Right cardiac atrium (tissue), 5 donors: ENCODE measurements at regions of chr7 and their contacts with region 1.

Region 1: DNA sequence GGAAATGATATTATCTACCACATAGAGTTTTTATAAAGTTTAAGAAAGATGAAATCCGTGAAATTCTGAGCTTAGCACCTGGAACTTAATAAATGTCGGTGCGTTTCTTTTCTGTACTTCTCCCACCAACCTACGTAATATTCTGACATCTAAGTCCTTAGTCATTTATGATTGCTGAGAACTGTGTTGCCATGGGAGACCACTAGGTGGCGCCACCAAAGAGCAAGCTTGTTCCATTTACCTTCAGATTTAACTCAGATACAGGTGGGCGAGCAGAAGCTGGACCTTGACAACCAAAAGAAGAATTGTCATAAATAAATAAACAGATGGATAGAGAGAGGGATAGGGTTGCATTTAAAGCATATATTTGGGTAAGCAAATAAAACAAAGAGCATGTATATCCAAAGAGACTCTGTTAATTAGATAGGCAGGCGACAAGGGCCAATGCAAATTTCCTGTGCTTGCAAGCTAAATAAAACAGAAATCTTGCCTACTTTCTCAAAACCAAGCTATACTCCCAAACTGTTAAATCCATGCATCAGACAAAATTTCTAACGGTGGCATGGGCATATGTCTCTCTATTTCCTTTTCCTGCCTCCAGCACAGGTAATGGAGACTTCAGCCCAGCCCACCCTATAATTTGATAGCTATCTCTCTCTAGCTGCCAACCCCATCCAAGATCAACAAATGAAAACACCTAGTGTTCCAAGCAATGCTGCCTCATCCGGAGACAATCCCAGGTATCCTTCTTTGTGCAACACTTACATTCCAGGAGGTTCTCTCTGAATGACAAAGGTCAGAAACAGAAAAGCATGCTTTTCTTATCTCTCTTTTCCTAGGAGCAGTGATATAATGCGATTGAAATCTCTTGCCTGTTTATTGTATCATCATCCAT is 699.6 kb downstream of the INHBA start:
- DNase-seq: peak; percentile 16 to 55 (median 49)
- ATAC-seq: no peak
- H3K4me3 ChIP-seq: no peak overlapping the region
- H3K27ac ChIP-seq: no peak overlapping the region
- H3K4me1 ChIP-seq: peaks cover 2% of the 10 kb centered on the region
- H3K27me3 ChIP-seq: no peaks in the 10 kb centered on the region

Region 2: DNA sequence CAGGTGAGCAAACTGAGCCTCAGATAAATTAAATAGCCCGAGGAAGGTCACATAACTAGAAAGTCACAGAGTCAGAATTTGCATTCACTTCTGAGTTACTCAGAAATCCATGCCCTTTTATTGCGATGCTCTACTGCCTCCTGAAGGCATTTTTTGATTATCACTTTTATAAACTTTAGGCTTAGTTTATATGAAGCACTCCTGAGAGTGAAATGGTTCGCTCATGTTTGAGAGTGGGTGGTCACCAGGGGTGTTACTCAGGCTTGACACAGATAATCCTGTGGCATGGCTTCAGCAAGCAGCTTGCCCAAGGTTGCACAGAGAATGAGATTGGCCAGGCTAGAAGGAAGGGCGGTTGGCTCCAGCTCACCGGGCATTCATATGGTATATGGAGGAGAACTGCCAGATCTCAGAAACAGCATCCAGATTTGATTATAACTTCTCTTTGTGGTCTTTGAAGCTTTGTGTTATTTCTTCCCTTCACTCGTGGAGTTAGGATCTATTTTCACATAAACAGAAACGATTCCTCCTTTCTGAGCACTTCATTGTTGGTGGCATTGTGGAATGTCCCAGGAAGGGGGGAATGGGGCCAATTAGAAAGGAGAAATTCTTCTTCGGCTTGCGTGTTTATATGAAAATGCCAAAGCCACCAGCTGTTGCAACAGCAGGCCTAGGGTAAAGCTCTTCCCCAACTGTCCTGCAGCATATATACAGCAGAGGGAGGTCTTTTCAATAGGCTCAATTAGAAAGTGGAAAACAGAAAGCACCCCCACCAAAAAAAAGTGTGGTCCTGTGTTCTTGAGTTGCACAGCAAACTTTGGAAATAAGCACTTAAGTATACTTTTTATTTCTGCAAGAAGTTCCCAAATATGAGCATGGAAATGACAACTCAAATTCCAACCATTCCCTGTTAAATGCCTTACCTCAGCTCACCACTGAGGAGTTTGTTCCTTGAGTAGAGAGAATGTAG is 239.7 kb before region 1 on chr7:
- intact Hi-C with region 1: no loop called
- DNase-seq: no peak
- ATAC-seq: no peak
- H3K4me3 ChIP-seq: no peak overlapping the region
- H3K27ac ChIP-seq: no peak overlapping the region
- H3K4me1 ChIP-seq: no peaks in the 10 kb centered on the region
- H3K27me3 ChIP-seq: no peaks in the 10 kb centered on the region

Region 3: DNA sequence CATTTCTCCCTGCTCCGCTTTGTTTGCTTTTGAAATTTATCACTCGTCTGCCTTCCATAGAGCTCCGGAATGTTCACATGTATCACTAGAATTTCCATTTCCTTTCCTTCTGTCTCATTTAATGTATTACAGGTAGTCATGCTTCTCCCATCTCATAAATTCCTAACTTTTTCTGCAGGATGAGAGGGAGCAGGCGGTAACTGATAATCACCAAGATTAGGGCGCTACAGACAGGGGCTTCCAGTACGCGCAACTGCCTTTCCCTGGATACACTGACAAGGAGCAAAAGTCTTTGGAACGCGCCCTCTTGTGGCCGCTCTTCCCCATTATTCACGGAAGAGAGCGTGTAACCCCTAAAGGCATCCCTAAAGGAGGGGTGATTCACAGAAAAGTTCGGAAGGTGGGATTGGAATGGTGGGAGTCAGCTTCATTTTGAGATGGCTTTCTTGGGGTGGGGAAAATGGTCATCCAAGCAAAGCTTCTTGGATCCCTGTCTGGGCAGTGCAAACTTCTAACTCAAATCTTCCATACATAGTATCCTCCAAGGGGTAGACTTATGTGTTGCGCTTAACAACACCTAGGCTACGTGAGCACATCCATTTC is 693.1 kb after region 1 on chr7:
- intact Hi-C with region 1: loop called in 2 of 4 experiments (anchors 10 kb)
- DNase-seq: peak; percentile 77 to 94 (median 88)
- ATAC-seq: peak; percentile 68 to 78
- H3K4me3 ChIP-seq: peak overlapping the region; percentile 40
- H3K27ac ChIP-seq: no peak overlapping the region
- H3K4me1 ChIP-seq: peaks cover 3% of the 10 kb centered on the region
- H3K27me3 ChIP-seq: no peaks in the 10 kb centered on the region

Region 4: GRCh38 chr7:41705109-41705901 is 702.0 kb after region 1 on chr7:
- intact Hi-C with region 1: loop called in 1 of 4 experiments (anchors 10 kb)
- DNase-seq: peak; percentile 86 to 94 (median 92)
- ATAC-seq: peak; percentile 88 to 96
- H3K4me3 ChIP-seq: peak overlapping the region; percentile 60
- H3K27ac ChIP-seq: no peak overlapping the region
- H3K4me1 ChIP-seq: peaks cover 2% of the 10 kb centered on the region
- H3K27me3 ChIP-seq: no peaks in the 10 kb centered on the region